ENCODE measurements at regions of chr17 and their contacts with region 1.

Region 1: GRCh38 chr17:60971515-60972369 is 294.1 kb downstream of the BCAS3 start:
- DNase-seq: peak in 6 of 9 donors; percentile 8 to 28 (median 16)
- ATAC-seq: peak; percentile 50
- H3K4me3 ChIP-seq: no peak overlapping the region
- H3K4me3 Mint-ChIP-seq: no peak overlapping the region
- H3K27ac ChIP-seq: no peak overlapping the region
- H3K27ac Mint-ChIP-seq: no peak overlapping the region
- H3K4me1 ChIP-seq: no peaks in the 10 kb centered on the region
- H3K4me1 Mint-ChIP-seq: peaks cover 0 to 3% (median 0%) of the 10 kb centered on the region in 7 donors
- H3K27me3 ChIP-seq: no peaks in the 10 kb centered on the region
- H3K27me3 Mint-ChIP-seq: peaks cover 0 to 15% (median 0%) of the 10 kb centered on the region in 5 donors

Region 2: DNA sequence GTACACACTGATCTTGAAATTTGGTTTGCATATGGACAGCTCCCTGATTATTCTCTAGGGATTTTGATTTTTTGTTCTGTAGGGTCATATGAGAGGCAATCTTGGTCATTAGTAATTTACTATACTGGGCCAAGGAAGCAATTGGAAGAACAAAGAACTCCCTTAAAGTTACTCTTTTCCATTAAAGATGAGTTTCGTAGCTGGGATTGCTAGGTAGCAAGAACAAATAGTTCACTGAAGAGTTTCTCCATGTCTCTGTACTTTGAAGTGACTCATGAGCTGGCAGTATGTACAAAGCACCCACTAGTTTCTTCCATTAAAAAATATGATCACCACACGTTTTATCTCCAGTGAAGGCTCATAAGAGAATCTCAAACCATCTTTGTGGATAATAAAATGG is 300.3 kb before region 1 on chr17:
- CTCF ChIA-PET with region 1: no interaction called
- POLR2A ChIA-PET with region 1: no interaction called
- intact Hi-C with region 1: no loop called
- DNase-seq: no peak
- ATAC-seq: no peak
- H3K4me3 ChIP-seq: no peak overlapping the region
- H3K4me3 Mint-ChIP-seq: no peak overlapping the region
- H3K27ac ChIP-seq: no peak overlapping the region
- H3K27ac Mint-ChIP-seq: no peak overlapping the region
- H3K4me1 ChIP-seq: no peaks in the 10 kb centered on the region
- H3K4me1 Mint-ChIP-seq: peaks cover 0 to 2% (median 0%) of the 10 kb centered on the region in 7 donors
- H3K27me3 ChIP-seq: no peaks in the 10 kb centered on the region
- H3K27me3 Mint-ChIP-seq: no peaks in the 10 kb centered on the region

Region 3: GRCh38 chr17:61157246-61157886 is 185.6 kb after region 1 on chr17:
- CTCF ChIA-PET with region 1: no interaction called
- POLR2A ChIA-PET with region 1: no interaction called
- intact Hi-C with region 1: no loop called
- DNase-seq: no peak
- ATAC-seq: no peak
- H3K4me3 ChIP-seq: no peak overlapping the region
- H3K4me3 Mint-ChIP-seq: no peak overlapping the region
- H3K27ac ChIP-seq: no peak overlapping the region
- H3K27ac Mint-ChIP-seq: peak overlapping the region in 1 of 9 donors; percentile 28
- H3K4me1 ChIP-seq: peaks cover 0 to 14% of the 10 kb centered on the region in 2 donors
- H3K4me1 Mint-ChIP-seq: peaks cover 10 to 36% (median 31%) of the 10 kb centered on the region in 7 donors
- H3K27me3 ChIP-seq: no peaks in the 10 kb centered on the region
- H3K27me3 Mint-ChIP-seq: peaks cover 0 to 10% (median 0%) of the 10 kb centered on the region in 5 donors

Region 4: DNA sequence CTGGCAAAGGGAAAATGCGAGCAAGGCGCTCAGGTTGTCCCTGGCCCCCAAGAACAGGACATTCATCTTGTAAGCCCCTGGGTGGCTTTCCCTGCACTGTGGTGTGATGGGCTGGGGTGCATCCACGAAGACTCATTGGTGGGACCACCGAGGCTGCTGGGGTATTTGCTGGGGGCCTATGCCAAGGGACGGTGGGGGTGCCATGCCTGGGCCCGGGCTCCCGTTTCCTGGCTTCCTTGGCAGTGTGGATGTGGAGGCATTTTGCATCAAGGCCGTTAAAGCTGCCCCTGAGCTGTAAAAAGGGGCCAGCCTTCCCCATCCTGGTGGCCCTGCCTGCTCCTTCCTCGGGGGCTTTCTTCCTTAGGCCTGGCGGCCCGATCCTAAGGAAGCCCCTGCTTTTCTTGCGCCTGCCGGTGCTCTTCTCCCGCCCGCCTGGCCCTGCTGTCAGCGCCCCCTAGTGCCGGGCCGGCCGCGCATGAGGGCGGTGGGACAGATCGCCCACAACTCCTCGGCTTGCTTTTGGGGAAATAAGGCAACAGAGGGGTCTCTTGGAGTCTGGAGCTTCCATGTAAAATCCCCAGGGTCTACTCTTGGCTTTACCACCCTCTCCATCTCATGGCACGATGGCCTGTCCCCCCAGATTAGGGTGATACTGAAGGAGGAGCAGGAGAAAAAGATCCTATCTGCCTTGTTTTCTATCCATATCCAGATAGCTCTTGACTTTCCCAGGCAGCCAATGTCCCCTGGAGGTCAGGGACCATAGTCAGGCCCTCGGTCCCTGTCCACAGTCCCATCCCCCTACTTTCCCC is 418.1 kb after region 1 on chr17:
- CTCF ChIA-PET with region 1: interaction called, 8 read pairs
- POLR2A ChIA-PET with region 1: no interaction called
- intact Hi-C with region 1: loop called in 1 of 2 experiments (anchors 1 kb)
- DNase-seq: peak in 5 of 9 donors; percentile 34 to 64 (median 53)
- ATAC-seq: peak; percentile 40
- H3K4me3 ChIP-seq: no peak overlapping the region
- H3K4me3 Mint-ChIP-seq: no peak overlapping the region
- H3K27ac ChIP-seq: no peak overlapping the region
- H3K27ac Mint-ChIP-seq: no peak overlapping the region
- H3K4me1 ChIP-seq: no peaks in the 10 kb centered on the region
- H3K4me1 Mint-ChIP-seq: peaks cover 0 to 8% (median 4%) of the 10 kb centered on the region in 7 donors
- H3K27me3 ChIP-seq: no peaks in the 10 kb centered on the region
- H3K27me3 Mint-ChIP-seq: peaks cover 1 to 26% (median 16%) of the 10 kb centered on the region in 5 donors